Psoas muscle (tissue), 8 donors: ENCODE measurements at regions of chr11 and their contacts with region 1.

Region 1: GRCh38 chr11:121112498-121113455 is 11.7 kb downstream of the TECTA start:
- DNase-seq: peak; percentile 51 to 65
- ATAC-seq: peak; percentile 83 to 95 (median 91)
- H3K4me3 ChIP-seq: no peak overlapping the region
- H3K27ac ChIP-seq: no peak overlapping the region
- H3K4me1 ChIP-seq: no peaks in the 10 kb centered on the region
- H3K27me3 ChIP-seq: no peaks in the 10 kb centered on the region
- CTCF ChIP-seq: peak; percentile 49

Region 2: GRCh38 chr11:120801801-120802689 is 310.7 kb before region 1 on chr11:
- intact Hi-C with region 1: no loop called
- DNase-seq: no peak
- ATAC-seq: no peak
- H3K4me3 ChIP-seq: no peak overlapping the region
- H3K27ac ChIP-seq: no peak overlapping the region
- H3K4me1 ChIP-seq: no peaks in the 10 kb centered on the region
- H3K27me3 ChIP-seq: peaks cover 0 to 3% (median 2%) of the 10 kb centered on the region in 3 donors
- CTCF ChIP-seq: peak; percentile 70

Region 3: DNA sequence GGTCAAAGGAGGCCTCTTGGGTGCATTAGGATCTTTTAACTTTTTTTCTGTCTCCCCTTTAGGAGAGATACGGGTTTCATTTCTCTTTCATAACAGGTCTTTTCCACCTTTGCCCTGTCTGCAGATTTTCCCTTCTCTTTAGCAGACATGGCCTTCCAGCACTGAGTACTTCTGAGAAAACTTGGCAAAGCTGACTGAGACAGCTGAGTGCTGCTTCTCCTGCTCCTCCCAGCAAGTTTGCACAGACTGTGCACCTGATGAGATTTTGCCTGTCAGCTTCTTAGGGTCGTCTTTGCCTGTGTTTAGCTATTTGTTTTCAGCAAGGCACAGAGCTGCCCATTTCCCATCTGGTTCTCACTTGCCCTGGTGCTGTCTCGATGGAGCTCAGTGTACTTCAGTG is 176.4 kb before region 1 on chr11:
- intact Hi-C with region 1: loop called in 1 of 2 experiments (anchors 5 kb)
- DNase-seq: no peak
- ATAC-seq: no peak
- H3K4me3 ChIP-seq: no peak overlapping the region
- H3K27ac ChIP-seq: no peak overlapping the region
- H3K4me1 ChIP-seq: no peaks in the 10 kb centered on the region
- H3K27me3 ChIP-seq: peaks cover 0 to 15% (median 4%) of the 10 kb centered on the region in 3 donors
- CTCF ChIP-seq: no peak